SK-N-SH (cell line): ENCODE measurements at regions of chr12 and their contacts with region 1.

Region 1: DNA sequence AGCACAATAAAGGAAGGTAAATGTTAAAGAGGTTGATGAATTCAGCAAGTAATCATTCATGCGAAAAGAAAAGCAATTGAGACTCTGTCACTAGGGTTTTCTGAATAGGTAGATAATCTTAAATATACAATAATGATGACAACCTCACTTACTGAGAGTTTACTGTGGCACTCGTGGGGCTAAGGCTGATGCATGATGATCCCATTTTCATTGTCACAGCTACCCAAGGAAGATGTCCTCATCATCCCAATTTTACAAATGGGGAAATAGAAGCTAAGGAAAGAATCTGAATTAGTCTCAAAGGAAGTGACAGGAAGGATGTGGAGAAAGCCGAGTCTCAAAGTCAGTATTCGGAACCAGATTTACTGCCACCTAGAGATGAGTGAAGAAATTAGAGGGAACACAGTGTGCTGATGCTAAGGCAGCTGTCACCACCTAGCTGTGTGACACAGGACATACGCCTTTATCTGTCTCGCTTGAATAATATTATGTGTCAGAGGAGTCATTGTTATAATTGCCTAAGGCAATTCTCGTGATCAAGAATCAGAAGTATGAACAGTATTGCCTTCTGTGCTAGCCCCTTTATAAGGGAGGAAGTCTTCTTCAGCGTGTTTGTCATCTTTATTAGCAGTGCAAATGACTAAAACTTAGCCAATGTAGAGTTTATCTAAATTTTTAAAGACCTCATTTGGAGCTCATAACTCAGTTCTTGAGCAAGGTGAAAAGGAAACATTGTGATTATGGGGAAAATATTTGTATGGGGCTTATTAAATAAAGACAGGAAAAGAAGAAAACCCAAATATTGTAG is 63.2 kb downstream of the ERGIC2 start:
- DNase-seq: peak; percentile 67
- H3K4me3 ChIP-seq: no peak overlapping the region; a peak in 1 of 4 replicates
- H3K27ac ChIP-seq: peak overlapping the region; percentile 14 to 66; a peak in 3 of 4 replicates
- H3K4me1 ChIP-seq: peaks cover 5 to 14% of the 10 kb centered on the region in 2 experiments; a peak in 3 of 4 replicates
- H3K27me3 ChIP-seq: no peaks in the 10 kb centered on the region
- CTCF ChIP-seq: peak; percentile 66
- EP300 ChIP-seq: no peak
- RAD21 ChIP-seq: peak; percentile 99

Region 2: DNA sequence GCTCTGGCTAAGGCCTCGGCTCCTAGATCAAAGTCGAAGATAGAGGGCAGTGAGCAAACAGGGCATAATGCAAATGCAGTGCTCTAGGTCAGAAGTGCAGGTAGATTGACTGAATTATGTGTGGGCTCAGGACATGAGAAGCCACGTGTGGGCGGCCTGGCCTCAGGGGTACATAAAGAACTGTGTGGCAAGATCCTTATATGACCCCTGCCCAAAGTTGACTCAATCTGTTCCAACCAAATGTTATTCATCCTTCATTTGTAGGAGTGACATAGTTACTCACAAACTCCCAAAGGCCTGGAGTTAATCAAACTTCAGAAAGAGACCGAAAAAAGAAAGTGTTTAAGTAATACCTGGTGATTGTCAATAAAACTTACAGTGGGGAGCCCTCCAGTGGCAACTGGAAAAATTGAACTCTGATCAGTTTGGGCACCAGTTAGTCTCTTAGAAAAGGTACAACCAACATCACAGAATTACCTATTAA is 319.1 kb before region 1 on chr12:
- CTCF ChIA-PET with region 1: interaction called, 12 read pairs
- POLR2A ChIA-PET with region 1: no interaction called
- DNase-seq: peak; percentile 23
- H3K4me3 ChIP-seq: no peak overlapping the region
- H3K27ac ChIP-seq: no peak overlapping the region
- H3K4me1 ChIP-seq: peaks cover 0 to 3% of the 10 kb centered on the region in 2 experiments; a peak in 1 of 4 replicates
- H3K27me3 ChIP-seq: no peaks in the 10 kb centered on the region
- CTCF ChIP-seq: peak; percentile 67
- EP300 ChIP-seq: no peak
- RAD21 ChIP-seq: peak; percentile 75

Region 3: DNA sequence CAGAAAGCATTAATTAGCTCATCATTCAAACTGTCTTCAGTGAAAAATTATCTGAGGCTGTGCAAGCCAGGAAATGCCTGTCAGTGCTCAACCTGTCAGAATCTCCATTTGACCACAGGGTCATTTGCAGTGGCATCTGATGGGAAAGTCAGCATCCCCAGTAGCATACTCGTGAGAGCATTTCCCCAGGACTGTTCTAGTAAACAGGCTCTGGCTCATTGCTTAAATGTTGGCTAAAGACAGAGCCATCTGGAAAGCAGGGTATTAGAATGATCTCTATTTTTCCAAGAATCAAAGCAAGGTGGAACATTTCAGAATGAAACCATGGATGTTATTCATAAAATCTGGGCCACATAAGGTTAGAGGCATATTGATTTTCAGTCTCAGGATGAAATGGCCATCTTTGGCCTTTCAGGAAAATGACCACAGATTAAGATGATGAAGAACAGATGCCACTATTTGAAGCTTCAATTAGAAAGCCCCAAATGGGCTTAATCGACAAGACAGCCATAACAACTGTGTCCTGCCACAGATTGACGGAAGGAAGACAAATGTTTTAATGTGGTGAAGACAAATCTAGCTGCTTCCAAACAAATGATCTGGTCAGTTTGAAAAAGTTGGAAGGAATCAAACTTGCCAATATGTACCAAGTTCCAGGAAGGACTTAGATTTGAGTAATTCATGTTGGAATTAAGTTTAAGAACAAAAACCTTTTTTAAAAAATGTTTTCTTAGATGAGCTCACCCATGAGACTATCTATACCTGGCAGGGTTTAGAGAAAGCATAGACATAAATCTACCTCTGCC is 262.7 kb before region 1 on chr12:
- CTCF ChIA-PET with region 1: interaction called, 18 read pairs
- POLR2A ChIA-PET with region 1: no interaction called
- DNase-seq: peak; percentile 73
- H3K4me3 ChIP-seq: no peak overlapping the region
- H3K27ac ChIP-seq: peak overlapping the region; percentile 4 to 99; a peak in 3 of 4 replicates
- H3K4me1 ChIP-seq: peaks cover 0 to 16% of the 10 kb centered on the region in 2 experiments; a peak in 2 of 4 replicates
- H3K27me3 ChIP-seq: no peaks in the 10 kb centered on the region
- CTCF ChIP-seq: no peak
- EP300 ChIP-seq: peak; percentile 24 to 88; a peak in 3 of 4 replicates
- RAD21 ChIP-seq: peak; percentile 25; the same call in 1 of the 2 replicates

Region 4: GRCh38 chr12:29088611-29089219 is 229.0 kb before region 1 on chr12:
- CTCF ChIA-PET with region 1: interaction called, 15 read pairs
- POLR2A ChIA-PET with region 1: no interaction called
- DNase-seq: peak; percentile 22
- H3K4me3 ChIP-seq: no peak overlapping the region
- H3K27ac ChIP-seq: no peak overlapping the region
- H3K4me1 ChIP-seq: no peaks in the 10 kb centered on the region
- H3K27me3 ChIP-seq: no peaks in the 10 kb centered on the region
- CTCF ChIP-seq: peak; percentile 51
- EP300 ChIP-seq: no peak
- RAD21 ChIP-seq: peak; percentile 46

Region 5: GRCh38 chr12:29304388-29304787 is 13.4 kb before region 1 on chr12:
- CTCF ChIA-PET with region 1: interaction called, 36 read pairs
- POLR2A ChIA-PET with region 1: no interaction called
- DNase-seq: no peak
- H3K4me3 ChIP-seq: no peak overlapping the region
- H3K27ac ChIP-seq: no peak overlapping the region
- H3K4me1 ChIP-seq: no peaks in the 10 kb centered on the region; a peak in 1 of 4 replicates
- H3K27me3 ChIP-seq: no peaks in the 10 kb centered on the region
- CTCF ChIP-seq: no peak
- EP300 ChIP-seq: no peak
- RAD21 ChIP-seq: no peak

Region 6: DNA sequence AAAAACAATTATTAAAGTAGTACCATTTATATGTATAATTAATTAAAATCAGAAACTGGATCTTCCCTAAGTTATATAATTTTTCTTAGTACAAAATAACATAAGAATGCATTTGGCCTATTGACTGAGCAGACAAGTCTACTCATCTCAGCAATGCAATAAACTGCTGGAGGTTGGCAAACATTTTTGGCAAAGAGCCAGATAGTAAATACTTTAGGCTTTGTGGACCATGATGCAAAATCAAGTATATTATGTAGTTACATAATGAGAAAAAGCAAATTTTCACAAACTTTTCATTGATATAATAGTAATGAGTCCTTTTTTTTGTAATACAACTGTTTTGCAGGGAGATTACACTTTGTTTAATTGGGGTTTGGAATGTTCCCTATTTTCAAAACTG is 32.3 kb after region 1 on chr12:
- CTCF ChIA-PET with region 1: no interaction called
- POLR2A ChIA-PET with region 1: no interaction called
- DNase-seq: peak; percentile 1
- H3K4me3 ChIP-seq: no peak overlapping the region
- H3K27ac ChIP-seq: no peak overlapping the region
- H3K4me1 ChIP-seq: no peaks in the 10 kb centered on the region
- H3K27me3 ChIP-seq: no peaks in the 10 kb centered on the region
- CTCF ChIP-seq: no peak
- EP300 ChIP-seq: 0 out of 4 replicates have a peak, but pooled peaks of 1 of the 2 experiments have one; percentile 19
- RAD21 ChIP-seq: no peak